ENCODE measurements at regions of chr11 and their contacts with region 1.

Region 1: GRCh38 chr11:113994077-113994954 is 19.4 kb downstream of the HTR3A start:
- DNase-seq: peak; percentile 36
- H3K4me3 ChIP-seq: no peak overlapping the region
- H3K27ac ChIP-seq: no peak overlapping the region
- H3K4me1 ChIP-seq: no peaks in the 10 kb centered on the region
- CTCF ChIP-seq: peak; percentile 87

Region 2: DNA sequence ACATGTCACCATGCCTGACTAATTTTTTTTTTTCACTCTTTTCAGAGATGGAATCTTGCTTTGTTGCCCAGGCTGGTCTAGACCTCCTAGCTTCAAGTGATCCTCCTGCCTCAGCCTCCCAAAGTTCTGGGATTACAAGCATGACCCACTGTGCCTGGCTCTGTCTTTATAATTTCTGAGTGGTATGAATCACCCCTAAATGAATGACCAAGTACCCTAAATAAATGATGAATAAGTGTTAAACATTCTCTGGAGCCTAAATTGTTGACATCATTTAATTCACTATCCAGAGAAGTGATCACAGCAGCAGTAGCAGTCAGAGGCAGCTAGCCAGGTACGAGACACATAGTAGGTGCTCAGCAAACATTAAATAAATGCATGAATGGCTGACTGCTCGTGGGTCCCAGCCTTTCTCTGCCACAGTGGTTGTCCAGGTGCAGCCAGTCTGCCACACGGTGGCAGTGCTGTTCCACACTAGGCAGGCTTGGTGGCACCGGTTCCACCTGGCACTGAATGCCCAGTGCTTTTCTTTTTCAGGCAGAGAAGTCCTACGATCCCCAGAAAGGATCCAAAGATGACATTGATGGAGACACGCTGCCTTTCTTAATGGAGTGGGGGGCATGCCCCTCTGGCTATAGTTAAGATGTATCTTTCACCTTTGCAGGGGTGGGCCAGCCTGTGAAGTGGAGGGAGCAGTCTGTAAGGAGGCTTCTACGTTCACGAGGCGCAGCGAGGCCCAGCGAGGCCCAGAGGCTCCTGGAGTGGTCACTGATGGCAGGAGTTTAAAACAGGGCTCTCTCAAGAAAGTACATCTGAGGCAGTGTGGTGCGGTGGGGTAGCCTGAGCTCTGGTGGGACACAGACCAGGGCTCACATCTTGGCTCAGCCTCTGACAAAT is 688.6 kb before region 1 on chr11:
- CTCF ChIA-PET with region 1: no interaction called
- POLR2A ChIA-PET with region 1: no interaction called
- intact Hi-C with region 1: loop called (anchors 1 kb)
- DNase-seq: peak; percentile 53
- H3K4me3 ChIP-seq: no peak overlapping the region
- H3K27ac ChIP-seq: no peak overlapping the region
- H3K4me1 ChIP-seq: no peaks in the 10 kb centered on the region
- CTCF ChIP-seq: peak; percentile 89

Region 3: DNA sequence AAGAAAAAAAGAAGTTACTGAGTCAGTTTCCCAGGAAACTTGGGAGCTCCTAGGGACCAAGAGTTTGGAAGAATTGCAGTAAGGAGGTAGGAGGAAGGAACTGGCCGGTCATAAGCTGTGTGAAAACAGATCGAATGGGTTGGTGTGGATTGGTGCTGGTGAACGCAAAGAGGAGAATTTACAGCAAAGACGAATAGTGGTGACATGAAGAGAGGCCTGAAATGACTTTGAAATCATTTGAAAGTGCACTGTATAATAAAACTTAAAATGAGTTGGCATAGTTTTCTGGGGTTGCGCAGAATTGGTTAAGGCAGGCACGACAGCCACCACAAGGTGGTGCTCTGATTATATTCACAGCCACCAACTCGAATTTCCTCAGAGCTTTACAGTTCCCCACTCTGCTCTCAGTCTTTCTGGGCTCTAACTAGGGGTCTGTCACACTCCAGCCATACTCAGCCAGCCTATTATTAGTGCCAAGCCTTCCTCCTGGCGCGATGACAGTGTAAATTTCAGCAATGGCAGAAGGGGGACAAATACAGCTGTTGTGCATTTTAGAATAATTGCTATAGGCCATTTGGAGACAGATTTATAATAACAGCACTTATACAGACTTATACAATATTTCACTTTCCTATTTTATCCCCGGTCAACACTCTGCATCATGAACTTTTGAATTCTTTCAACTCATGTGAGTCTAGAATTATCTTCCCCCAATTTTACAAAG is 98.0 kb before region 1 on chr11:
- CTCF ChIA-PET with region 1: interaction called, 6 read pairs
- POLR2A ChIA-PET with region 1: no interaction called
- intact Hi-C with region 1: loop called (anchors 2 kb)
- DNase-seq: peak; percentile 48
- H3K4me3 ChIP-seq: no peak overlapping the region
- H3K27ac ChIP-seq: no peak overlapping the region
- H3K4me1 ChIP-seq: no peaks in the 10 kb centered on the region
- CTCF ChIP-seq: peak; percentile 92

Region 4: GRCh38 chr11:113960702-113961330 is 33.5 kb before region 1 on chr11:
- CTCF ChIA-PET with region 1: no interaction called
- POLR2A ChIA-PET with region 1: no interaction called
- intact Hi-C with region 1: no loop called
- DNase-seq: no peak
- H3K4me3 ChIP-seq: no peak overlapping the region
- H3K27ac ChIP-seq: no peak overlapping the region
- H3K4me1 ChIP-seq: no peaks in the 10 kb centered on the region
- CTCF ChIP-seq: no peak

Region 5: DNA sequence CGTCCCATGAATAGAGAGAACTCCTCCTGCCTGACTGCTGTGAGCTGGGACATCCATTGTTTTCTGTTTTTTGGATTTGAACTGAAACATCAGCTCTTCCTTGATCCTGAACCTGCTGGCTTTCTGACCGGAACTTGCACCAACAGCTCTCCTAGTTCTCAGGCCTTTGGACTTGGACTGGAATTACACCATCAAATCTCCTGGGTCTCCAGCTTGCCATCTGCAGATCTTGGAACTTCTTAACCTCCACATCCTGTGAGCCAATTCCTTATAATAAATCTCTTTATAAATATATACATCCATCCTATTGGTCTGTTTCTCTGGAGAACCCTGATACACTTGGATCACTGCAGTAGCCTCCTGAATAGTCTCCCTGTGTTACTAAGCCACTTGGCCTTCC is 22.7 kb after region 1 on chr11:
- CTCF ChIA-PET with region 1: interaction called, 11 read pairs
- POLR2A ChIA-PET with region 1: no interaction called
- intact Hi-C with region 1: no loop called
- DNase-seq: no peak
- H3K4me3 ChIP-seq: no peak overlapping the region
- H3K27ac ChIP-seq: no peak overlapping the region
- H3K4me1 ChIP-seq: no peaks in the 10 kb centered on the region
- CTCF ChIP-seq: no peak

Region 6: DNA sequence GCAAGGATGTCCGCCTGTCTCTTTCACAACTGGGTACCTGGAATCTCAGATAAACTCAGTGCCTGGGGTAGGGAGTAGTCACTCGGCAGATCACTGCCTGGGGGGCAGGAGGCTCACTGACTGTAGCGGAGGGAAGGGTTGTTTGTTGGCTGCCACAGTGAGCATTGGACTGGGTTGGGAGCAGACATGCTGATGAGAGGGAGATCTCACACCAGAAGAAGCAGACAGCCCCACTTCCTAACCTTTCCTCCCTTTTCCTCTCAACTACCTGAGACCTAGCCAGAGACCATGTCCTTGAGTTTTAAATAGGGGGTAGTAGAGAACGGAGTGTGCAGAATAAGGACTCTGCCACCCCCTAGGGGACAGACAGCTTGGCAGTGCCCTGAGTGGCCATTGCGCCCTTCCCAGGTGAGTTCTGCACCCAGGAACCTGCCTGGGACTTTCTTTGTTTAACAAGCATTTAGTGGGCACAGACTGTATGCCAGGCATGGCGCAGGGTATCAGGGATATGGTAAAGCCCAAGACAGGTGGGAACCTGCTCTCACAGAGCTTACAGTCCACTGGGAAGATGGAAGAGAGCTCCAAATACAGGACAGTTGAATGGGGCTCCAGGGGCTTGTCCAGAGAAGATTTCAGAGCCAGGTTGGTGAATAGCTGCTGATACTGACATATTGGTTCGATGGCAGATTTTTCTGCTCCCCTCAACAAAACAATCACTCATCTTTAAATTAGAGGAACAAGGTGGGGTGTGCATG is 186.2 kb after region 1 on chr11:
- CTCF ChIA-PET with region 1: interaction called, 3 read pairs
- POLR2A ChIA-PET with region 1: interaction called, 3 read pairs
- intact Hi-C with region 1: loop called (anchors 1 kb)
- DNase-seq: peak; percentile 74
- H3K4me3 ChIP-seq: no peak overlapping the region
- H3K27ac ChIP-seq: no peak overlapping the region
- H3K4me1 ChIP-seq: peaks cover 33% of the 10 kb centered on the region
- CTCF ChIP-seq: peak; percentile 84